Cardiac septum (tissue), 1 donor: ENCODE measurements at regions of chr9 and their contacts with region 1.

Region 1: GRCh38 chr9:37784616-37785483 is at the start of gene EXOSC3:
- DNase-seq: peak; percentile 97
- total RNA-seq, gene EXOSC3: 13.1 TPM

Region 2: DNA sequence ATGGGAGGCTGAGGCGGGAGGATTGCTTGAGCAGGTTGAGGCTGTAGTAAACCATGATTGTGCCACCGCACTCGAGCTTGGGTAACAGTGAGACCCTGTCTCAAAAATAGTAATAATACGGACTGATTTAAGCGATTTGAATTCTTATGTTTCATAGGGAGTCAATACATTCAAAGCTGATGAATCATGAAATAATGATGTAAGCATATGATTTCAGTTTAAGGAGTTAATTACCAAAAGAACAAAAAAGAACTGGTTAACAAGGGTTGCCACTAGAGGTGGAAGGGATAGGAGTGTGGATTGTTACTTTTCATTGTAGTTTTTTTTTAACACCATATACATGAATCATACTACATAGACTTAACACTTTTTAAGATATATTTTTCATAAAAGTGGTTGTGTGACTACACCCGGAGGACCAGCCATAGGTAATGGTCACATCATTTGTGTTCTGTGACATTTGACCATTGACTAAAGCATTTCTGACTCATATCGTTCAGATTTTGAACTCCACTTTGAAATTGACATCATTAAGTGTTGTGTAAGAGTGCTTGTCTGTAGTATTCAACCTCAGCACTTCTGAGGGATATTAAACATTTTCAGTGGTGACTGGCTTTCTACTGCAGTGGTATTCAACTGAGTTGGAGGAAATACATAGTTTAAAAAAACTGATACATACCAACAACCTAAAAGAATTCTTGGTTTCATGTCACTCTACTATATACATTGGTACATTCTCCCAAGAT is 24.3 kb before region 1 on chr9:
- intact Hi-C with region 1: no loop called
- DNase-seq: no peak

Region 3: DNA sequence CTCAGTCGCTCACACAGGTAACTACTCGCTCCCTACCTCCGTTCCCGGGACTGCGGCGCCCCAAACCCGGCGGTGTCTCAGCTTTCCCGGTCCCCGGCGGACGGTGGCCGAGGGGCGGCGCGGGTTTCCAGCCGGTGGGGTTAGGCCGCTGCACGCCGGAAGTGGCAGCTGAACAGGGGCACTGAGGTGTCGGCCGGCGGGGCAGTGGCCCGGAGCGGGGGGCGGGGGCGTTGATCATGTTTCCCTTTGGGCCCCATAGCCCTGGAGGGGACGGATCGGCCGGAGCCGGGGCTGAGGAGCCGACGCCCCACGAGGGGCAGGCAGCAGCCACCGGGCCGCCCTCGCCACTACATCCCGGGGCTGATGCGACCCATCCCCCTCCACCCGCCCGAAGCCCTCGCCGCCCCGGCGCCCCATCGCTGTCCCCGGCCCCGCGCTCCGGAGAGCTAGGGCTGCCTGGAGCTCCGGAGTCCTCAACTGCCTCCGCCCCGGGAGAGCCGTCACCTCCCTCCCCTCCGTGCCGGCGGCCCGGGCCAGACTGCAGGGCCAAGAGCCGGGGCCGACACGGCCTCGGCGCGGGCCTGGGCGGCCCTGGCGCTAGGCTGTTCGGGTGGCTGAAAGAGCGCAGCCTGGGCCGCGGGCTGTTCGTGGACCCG is 15.9 kb after region 1 on chr9 and contains the start of gene DCAF10:
- intact Hi-C with region 1: loop called (anchors 1 kb)
- DNase-seq: peak; percentile 94
- total RNA-seq, gene DCAF10: 15.7 TPM